ENCODE measurements at regions of chr11 and their contacts with region 1.

Region 1: DNA sequence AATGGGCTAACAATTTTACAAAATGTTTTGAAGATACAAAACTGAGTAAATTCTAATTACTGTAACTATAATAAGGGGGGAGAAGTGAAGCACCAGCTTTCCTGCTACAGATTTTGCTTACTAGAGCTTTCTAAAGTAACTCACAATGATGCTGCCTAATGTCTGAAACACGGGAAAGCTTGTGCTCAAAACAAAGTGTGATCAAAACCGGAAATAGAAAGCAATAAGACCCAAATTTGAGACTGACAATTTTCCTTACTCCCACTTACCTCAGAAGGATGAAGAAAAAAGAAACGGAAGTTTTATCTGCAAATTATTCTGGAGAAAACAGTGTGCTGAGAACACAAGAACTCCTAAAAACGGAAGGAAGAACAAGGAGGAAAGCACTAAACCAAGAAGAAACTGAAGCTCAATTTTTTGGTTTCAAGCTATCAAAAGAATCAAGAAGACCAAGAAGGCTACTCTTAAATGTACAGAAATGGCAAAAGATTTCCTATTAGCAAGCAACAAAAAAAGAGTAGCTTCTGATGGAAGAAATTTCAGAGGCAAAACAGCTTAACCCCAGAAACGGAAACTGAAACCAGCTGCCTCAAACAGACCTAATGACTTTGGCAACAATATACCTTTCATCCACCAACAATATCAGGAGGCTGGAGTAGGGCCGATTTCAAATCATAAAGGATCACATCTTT is 33.4 kb downstream of the AMBRA1 start:
- DNase-seq: no peak
- ATAC-seq: peak; percentile 79
- H3K4me3 Mint-ChIP-seq: peak overlapping the region; percentile 92
- H3K27ac Mint-ChIP-seq: peak overlapping the region; percentile 96
- H3K4me1 Mint-ChIP-seq: peaks cover 43% of the 10 kb centered on the region
- H3K27me3 Mint-ChIP-seq: no peaks in the 10 kb centered on the region

Region 2: DNA sequence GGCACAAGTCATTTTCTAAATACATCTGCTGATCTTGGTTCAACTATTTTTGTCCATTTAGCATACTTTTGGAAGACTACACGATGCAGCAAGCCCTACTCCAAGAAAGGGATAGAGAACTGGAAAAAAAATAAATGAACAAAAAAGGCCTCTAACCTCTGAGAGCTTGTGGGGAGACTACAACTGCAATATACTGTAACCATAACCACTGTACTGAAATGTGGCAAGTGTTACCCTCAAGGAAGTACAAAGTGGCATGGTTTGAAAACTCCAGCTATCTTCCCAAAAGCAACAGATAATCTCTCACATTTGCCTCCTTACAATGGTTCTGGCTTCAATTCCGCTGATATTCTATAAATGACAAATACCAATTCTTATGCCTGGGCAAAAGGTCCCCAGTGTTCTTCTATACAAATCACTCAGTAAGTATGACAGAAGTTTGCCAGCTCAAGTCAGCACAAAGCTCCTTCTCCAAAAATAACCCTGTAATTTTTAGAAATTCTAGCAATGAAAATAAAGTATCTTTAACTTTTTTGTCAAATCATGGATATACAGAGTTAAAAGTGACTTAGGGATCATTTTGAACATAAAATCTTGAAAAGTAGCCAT is 10.4 kb after region 1 on chr11:
- POLR2A ChIA-PET with region 1: interaction called, 15 read pairs
- DNase-seq: no peak
- ATAC-seq: peak; percentile 61
- H3K4me3 Mint-ChIP-seq: no peak overlapping the region
- H3K27ac Mint-ChIP-seq: peak overlapping the region; percentile 33
- H3K4me1 Mint-ChIP-seq: peaks cover 19% of the 10 kb centered on the region
- H3K27me3 Mint-ChIP-seq: no peaks in the 10 kb centered on the region

Region 3: GRCh38 chr11:46593550-46594373 is 33.3 kb after region 1 on chr11 and contains the start of gene AMBRA1:
- POLR2A ChIA-PET with region 1: interaction called, 24 read pairs
- DNase-seq: peak; percentile 84
- ATAC-seq: peak; percentile 88
- H3K4me3 Mint-ChIP-seq: peak within 1 kb of the TSS; percentile 96
- H3K27ac Mint-ChIP-seq: peak within 1 kb of the TSS; percentile 91
- H3K4me1 Mint-ChIP-seq: peaks cover 27% of the 10 kb centered on the region
- H3K27me3 Mint-ChIP-seq: no peaks in the 10 kb centered on the region
- total RNA-seq, gene AMBRA1: 39.1 to 40.5 TPM